ENCODE measurements at regions of chr17 and their contacts with region 1.

Region 1: GRCh38 chr17:49694847-49695683 is 12.7 kb downstream of the SLC35B1 start:
- DNase-seq: peak; percentile 31
- H3K4me3 ChIP-seq: no peak overlapping the region
- H3K27ac ChIP-seq: no peak overlapping the region
- H3K4me1 ChIP-seq: peaks cover 16% of the 10 kb centered on the region
- H3K27me3 ChIP-seq: no peaks in the 10 kb centered on the region
- CTCF ChIP-seq: peak; percentile 77 to 92
- POLR2A ChIP-seq: no peak

Region 2: DNA sequence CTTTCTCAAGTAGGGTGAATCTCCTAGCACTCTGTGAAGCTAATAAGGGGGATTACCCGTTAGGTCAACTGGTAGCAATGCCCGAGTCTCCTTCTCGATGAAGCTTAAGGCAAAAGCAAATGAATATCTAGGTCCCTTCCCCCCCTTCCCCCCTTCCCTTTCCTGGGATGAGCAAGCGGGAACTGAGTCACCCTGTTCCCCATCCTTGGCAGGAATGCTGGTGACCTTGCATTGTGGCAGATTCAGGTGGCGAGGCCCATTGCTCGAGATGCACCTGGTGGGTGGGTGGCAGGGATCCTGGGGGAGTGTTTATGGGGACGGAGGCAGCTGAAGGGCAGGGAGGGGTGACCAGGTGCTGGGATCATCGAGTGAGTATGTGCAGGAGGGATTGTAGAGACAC is 112.3 kb before region 1 on chr17:
- CTCF ChIA-PET with region 1: interaction called, 10 read pairs
- POLR2A ChIA-PET with region 1: no interaction called
- dilution Hi-C with region 1: no loop called
- intact Hi-C with region 1: no loop called
- DNase-seq: no peak
- H3K4me3 ChIP-seq: no peak overlapping the region
- H3K27ac ChIP-seq: no peak overlapping the region
- H3K4me1 ChIP-seq: peaks cover 6% of the 10 kb centered on the region
- H3K27me3 ChIP-seq: no peaks in the 10 kb centered on the region
- CTCF ChIP-seq: no peak
- POLR2A ChIP-seq: no peak

Region 3: GRCh38 chr17:49616086-49616485 is 79.0 kb before region 1 on chr17:
- CTCF ChIA-PET with region 1: interaction called, 13 read pairs
- POLR2A ChIA-PET with region 1: no interaction called
- dilution Hi-C with region 1: no loop called
- intact Hi-C with region 1: no loop called
- DNase-seq: no peak
- H3K4me3 ChIP-seq: no peak overlapping the region
- H3K27ac ChIP-seq: no peak overlapping the region
- H3K4me1 ChIP-seq: peaks cover 3% of the 10 kb centered on the region
- H3K27me3 ChIP-seq: no peaks in the 10 kb centered on the region
- CTCF ChIP-seq: peak in 1 of 2 donors; percentile 21
- POLR2A ChIP-seq: no peak

Region 4: GRCh38 chr17:49915670-49916069 is 220.6 kb after region 1 on chr17:
- CTCF ChIA-PET with region 1: no interaction called
- POLR2A ChIA-PET with region 1: no interaction called
- dilution Hi-C with region 1: no loop called
- intact Hi-C with region 1: no loop called
- DNase-seq: no peak
- H3K4me3 ChIP-seq: no peak overlapping the region
- H3K27ac ChIP-seq: no peak overlapping the region
- H3K4me1 ChIP-seq: no peaks in the 10 kb centered on the region
- H3K27me3 ChIP-seq: peaks cover 51 to 54% of the 10 kb centered on the region in 2 experiments
- CTCF ChIP-seq: no peak
- POLR2A ChIP-seq: no peak

Measured in endothelial cell of umbilical vein (primary cell).